AG04450 (cell line): ENCODE measurements at regions of chr2 and their contacts with region 1.

Region 1: DNA sequence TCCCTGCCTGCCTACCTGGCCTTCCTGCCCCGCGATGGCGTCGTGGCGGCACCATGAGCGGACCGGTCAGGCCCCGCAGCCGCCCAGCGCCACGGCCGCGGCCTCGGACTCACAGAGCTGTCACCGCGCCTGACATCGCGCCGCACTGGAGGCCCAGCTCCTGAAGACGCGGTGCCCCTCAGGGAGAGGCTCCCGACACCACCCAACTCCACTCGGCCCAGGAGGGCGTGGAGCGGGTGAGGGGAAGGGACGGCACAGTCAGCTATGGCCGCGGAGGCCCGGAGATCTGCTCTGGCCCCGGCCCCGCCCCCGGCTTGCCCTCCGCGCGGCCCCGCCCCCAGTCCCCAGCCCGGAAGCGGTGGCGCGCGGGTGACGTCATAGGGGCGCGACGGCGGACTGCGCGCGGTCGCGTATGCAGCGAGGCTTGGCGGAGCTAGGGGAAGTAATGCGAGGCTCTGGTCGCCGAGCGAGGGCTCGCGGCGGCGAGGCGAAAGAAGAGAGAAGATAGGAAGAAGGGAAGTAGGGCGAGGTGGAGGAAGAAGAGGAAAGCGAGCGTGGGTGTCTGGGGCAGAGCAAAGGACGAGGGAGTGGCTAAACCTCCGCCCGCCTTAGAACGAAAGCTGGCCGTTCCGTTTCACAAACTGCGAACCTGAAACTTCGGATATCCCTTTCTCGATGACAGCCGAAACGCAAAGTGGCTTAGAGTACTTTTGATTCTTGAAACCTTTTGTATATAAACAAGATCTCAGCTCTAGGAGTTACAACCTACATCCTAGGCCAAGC is at the start of gene SLC35F5:
- DNase-seq: peak; percentile 70
- H3K4me3 ChIP-seq: peak within 1 kb of the TSS; percentile 98
- H3K27ac ChIP-seq: peak within 1 kb of the TSS; percentile 96
- H3K27me3 ChIP-seq: no peaks in the 10 kb centered on the region
- CTCF ChIP-seq: no peak
- polyA plus RNA-seq, gene SLC35F5: 67.2 and 91.0 TPM in 2 replicates

Region 2: DNA sequence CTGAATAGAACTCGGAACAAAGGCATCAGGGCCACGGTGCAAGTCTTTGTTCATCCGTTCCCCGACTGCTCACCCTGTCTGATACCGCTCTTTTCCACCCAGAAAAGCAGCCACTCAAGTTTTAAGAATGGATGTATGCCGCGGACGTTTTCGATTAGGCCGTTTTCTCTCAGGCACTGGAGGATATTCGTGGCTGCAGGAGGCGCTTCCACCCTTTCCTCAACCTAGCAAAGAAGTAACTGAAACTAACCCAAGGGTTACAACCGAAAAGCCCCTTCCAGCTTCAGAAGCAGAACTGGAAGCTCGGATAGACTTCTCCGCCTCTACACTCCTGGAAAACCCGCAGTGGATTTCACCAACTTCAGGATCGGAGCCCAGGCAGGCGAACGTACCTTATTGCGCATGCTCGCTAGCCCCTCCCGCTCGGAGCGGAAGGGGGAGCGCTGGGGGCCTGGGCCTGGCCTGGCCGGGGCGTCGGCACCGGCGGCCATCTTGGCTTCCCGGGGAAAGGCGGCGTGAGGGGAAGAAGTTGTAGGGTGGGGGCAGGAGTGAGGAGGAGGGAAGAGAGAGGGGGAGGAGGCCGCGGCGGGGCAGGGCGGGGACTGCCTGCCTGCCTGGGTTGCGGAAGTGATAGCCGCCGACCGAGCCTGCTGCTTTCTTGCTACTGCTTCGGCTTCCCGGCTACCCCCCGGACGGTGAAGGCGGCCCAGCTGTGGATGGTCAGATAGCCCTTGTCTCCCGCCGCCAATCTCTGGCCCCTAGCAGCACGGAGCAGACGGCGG is 133.1 kb after region 1 on chr2 and contains the start of gene ACTR3:
- CTCF ChIA-PET with region 1: interaction called, 3 read pairs
- POLR2A ChIA-PET with region 1: interaction called, 23 read pairs
- DNase-seq: peak; percentile 97
- H3K4me3 ChIP-seq: peak within 1 kb of the TSS; percentile 91
- H3K27ac ChIP-seq: peak within 1 kb of the TSS; percentile 97
- H3K27me3 ChIP-seq: no peaks in the 10 kb centered on the region
- CTCF ChIP-seq: no peak
- polyA plus RNA-seq, gene ACTR3: 371 and 536 TPM in 2 replicates